RWPE1 (cell line): ENCODE measurements at regions of chr17 and their contacts with region 1.

Region 1: GRCh38 chr17:43442711-43443110 is 41.1 kb upstream of the DHX8 start:
- DNase-seq: peak; percentile 20
- H3K27ac ChIP-seq: no peak overlapping the region
- CTCF ChIP-seq: no peak

Region 2: DNA sequence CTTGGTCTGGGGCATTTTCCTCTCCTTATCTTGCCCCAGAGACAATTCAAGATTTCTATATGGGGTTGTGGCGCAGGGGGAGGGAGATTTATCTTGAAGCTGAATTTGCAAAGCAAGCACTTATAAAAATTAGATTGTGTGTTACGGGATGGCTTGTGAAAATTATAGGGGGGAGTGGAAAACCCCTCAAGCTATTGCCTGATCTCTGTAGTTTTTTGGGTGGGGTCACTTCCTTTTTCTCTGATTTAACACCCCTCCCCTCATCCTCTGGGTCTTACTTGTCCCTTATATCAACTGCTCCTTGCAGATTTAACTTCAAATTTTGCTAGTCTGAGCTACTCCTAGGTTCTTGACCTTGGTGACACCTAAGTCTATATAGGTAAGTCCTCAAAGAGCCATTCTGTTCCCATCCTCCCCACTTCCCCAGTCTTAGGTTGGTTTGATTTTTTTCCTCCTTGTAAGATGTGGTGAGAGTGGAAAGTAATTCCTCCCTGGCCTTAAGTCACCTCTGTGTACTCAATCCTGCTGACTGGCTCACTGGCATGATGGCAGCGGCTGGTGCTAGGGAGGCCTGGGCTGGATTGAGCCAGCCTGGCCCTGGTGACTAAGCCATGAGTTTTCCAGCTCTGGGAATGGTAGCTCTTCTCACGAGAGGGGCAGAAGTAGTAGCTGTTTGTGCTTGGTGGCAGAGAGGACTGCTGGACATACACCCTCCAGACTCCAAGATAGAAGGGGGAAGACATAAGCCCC is 41.6 kb before region 1 on chr17:
- CTCF ChIA-PET with region 1: no interaction called
- POLR2A ChIA-PET with region 1: interaction called, 10 read pairs
- DNase-seq: peak; percentile 88
- H3K27ac ChIP-seq: peak overlapping the region; percentile 90
- CTCF ChIP-seq: no peak

Region 3: DNA sequence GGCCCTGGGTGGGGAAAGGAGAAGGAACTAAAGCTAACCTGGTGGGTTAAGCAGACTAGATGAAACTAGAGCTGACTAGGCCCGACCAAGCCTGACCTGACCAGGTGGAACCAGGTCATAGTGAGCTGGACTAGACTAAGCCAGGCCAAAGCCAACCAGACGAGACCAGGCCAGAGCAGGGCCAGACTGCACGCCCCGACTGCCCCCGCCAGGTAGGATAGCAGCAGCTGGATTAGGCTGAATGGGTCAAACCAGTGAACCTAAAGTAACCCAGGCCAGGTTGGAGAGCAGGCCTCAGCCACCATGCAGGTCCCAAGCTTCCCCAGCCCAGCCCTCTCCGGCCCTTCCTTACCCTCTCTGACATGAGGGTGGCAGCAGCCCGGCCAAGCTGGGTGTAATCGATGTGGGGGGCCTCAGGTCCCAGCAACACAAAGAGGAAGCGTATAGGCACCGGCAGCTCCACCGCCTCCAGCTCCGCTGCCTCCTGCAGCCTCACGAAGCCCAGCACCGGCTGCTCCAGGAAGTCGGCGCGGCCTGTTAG is 816.2 kb after region 1 on chr17:
- CTCF ChIA-PET with region 1: no interaction called
- POLR2A ChIA-PET with region 1: no interaction called
- DNase-seq: no peak
- H3K27ac ChIP-seq: no peak overlapping the region
- CTCF ChIP-seq: no peak